ENCODE measurements at regions of chr19 and their contacts with region 1.

Region 1: GRCh38 chr19:13748169-13748828 is 16.0 kb upstream of the MRI1 start:
- DNase-seq: no peak
- ATAC-seq: no peak
- H3K4me3 Mint-ChIP-seq: peak overlapping the region; percentile 87
- H3K27ac Mint-ChIP-seq: peak overlapping the region; percentile 85
- H3K4me1 Mint-ChIP-seq: peaks cover 27% of the 10 kb centered on the region
- H3K27me3 Mint-ChIP-seq: no peaks in the 10 kb centered on the region
- CTCF ChIP-seq: no peak

Region 2: DNA sequence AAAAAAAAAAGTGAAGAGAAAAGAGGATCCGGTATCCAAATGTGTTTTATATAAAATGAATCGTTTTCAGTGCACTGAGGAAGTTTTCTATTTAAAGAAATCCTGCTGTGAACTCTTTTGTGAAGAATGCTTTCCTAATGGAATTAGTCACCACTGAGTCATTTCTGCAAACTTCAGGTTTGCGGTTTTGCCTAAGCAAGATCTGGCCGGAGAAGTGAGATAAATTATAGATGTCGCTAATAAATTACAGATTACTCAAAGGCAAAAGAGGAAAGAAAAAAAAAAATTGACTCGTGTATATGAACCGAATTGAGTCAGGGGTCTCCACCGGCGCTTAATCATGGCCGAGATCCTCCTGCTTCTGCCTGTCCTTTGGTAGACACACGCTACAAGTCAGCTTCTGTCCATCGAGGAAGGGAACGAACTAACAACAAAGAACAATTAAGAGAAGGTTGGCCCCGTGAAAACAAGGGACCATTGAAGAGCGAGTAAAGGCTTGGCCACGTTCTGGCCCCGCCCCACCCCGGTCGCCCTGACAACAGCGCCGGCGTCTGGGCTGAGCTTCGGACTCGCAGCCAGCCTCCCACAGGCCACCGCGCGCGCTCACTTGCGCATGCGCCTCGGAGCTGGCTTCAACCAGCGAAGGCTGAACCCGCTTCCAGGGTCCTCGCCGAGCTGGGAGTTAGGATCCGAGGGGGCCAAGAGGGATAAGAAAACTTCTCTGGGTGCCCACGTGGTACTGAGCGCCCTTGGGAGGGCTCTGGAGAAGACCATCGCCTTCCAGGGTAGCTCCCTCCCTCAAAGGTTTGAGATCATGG is 16.9 kb before region 1 on chr19:
- CTCF ChIA-PET with region 1: interaction called, 5 read pairs
- POLR2A ChIA-PET with region 1: interaction called, 34 read pairs
- intact Hi-C with region 1: loop called (anchors 1 kb)
- DNase-seq: peak; percentile 96
- ATAC-seq: peak; percentile 100
- H3K4me3 Mint-ChIP-seq: peak overlapping the region; percentile 90
- H3K27ac Mint-ChIP-seq: peak overlapping the region; percentile 93
- H3K4me1 Mint-ChIP-seq: peaks cover 21% of the 10 kb centered on the region
- H3K27me3 Mint-ChIP-seq: no peaks in the 10 kb centered on the region
- CTCF ChIP-seq: no peak

Region 3: DNA sequence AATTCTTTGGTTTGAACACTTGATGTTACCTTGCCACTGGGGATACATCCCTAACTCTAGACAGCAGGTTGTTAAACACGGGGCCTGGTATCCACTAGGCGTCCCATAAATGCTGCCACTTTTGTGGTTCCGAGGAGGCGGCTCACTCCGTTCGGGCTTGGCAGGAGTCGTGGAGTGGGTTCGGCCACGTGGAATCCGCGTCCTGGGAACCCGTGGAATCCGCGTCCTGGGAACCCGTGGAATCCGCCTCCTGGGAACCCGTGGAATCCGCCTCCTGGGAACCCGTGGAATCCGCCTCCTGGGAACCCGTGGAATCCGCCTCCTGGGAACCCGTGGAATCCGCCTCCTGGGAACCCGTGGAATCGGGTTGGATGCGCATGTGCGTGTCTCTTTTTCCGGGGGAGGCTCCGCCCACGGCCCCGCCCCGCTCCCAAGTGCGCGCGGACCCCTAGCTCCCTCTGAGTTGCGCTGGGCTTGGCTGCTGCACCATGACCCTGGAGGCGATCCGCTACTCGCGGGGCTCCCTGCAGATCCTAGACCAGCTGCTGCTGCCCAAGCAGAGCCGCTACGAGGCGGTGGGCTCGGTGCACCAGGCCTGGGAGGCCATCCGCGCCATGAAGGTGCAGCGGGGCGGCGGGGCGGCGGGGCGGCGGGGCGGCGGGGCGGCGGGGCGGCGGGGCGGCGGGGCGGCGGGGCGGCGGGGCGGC is 16.0 kb after region 1 on chr19 and contains the start of gene MRI1:
- CTCF ChIA-PET with region 1: interaction called, 3 read pairs
- POLR2A ChIA-PET with region 1: interaction called, 19 read pairs
- intact Hi-C with region 1: no loop called
- DNase-seq: peak; percentile 70
- ATAC-seq: peak; percentile 84
- H3K4me3 Mint-ChIP-seq: peak within 1 kb of the TSS; percentile 86
- H3K27ac Mint-ChIP-seq: peak within 1 kb of the TSS; percentile 70
- H3K4me1 Mint-ChIP-seq: peaks cover 16% of the 10 kb centered on the region
- H3K27me3 Mint-ChIP-seq: no peaks in the 10 kb centered on the region
- CTCF ChIP-seq: no peak
- total RNA-seq, gene MRI1: 32.5 and 37.5 TPM in 2 replicates

Region 4: DNA sequence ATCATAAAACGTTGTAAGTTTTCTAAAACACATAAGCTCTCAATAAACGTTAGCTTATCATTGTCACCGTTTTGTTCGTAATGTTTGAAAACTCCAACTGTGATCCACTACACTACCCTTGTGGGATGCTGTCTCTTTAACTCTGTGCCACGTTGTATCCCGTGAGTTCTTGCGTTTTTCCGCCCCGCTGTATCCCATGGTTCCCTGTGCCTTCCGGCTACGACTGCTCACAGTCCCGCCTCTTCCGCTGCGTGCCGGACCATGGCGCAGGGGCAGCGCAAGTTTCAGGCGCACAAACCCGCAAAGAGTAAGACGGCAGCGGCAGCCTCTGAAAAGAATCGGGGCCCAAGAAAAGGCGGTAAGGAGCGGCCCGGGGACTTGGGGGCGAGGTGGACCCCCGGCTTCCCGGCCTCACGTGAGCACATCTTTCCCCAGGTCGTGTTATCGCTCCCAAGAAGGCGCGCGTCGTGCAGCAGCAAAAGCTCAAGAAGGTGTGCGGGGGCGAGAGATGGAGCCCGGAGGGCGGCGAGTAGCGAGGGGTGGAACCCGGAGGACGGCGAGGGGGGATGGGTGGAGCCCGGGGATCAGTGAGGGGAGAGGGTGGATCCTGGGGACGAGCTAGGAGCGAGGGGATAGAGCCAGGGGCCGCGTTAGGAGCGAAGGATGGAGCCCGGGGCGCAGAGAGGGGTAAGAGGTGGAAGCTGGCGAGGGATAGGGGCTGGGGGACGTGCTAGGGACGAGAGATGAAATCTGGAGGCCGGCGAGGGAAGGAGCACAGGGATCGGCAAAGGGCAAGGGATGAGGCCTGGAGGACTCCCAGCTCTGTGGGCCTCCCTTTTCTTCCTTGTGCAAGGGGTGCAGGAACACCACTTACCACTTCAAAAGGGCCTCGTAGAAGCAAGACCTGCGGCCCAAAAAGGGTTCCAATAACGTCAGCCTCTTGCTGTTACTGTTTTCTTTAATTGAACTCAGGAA is 26.2 kb after region 1 on chr19 and contains the start of gene C19orf53:
- CTCF ChIA-PET with region 1: no interaction called
- POLR2A ChIA-PET with region 1: interaction called, 25 read pairs
- intact Hi-C with region 1: loop called (anchors 1 kb)
- DNase-seq: peak; percentile 86
- ATAC-seq: peak; percentile 99
- H3K4me3 Mint-ChIP-seq: peak within 1 kb of the TSS; percentile 100
- H3K27ac Mint-ChIP-seq: peak within 1 kb of the TSS; percentile 95
- H3K4me1 Mint-ChIP-seq: peaks cover 26% of the 10 kb centered on the region
- H3K27me3 Mint-ChIP-seq: no peaks in the 10 kb centered on the region
- CTCF ChIP-seq: no peak
- total RNA-seq, gene C19orf53: 74.9 and 76.1 TPM in 2 replicates

Region 5: GRCh38 chr19:13833330-13834243 is 85.3 kb after region 1 on chr19:
- CTCF ChIA-PET with region 1: no interaction called
- POLR2A ChIA-PET with region 1: interaction called, 10 read pairs
- intact Hi-C with region 1: no loop called
- DNase-seq: peak; percentile 92
- ATAC-seq: peak; percentile 86
- H3K4me3 Mint-ChIP-seq: peak overlapping the region; percentile 90
- H3K27ac Mint-ChIP-seq: peak overlapping the region; percentile 86
- H3K4me1 Mint-ChIP-seq: peaks cover 45% of the 10 kb centered on the region
- H3K27me3 Mint-ChIP-seq: no peaks in the 10 kb centered on the region
- CTCF ChIP-seq: no peak

Region 6: GRCh38 chr19:14091081-14091812 is 342.9 kb after region 1 on chr19:
- CTCF ChIA-PET with region 1: no interaction called
- POLR2A ChIA-PET with region 1: no interaction called
- intact Hi-C with region 1: loop called (anchors 5 kb)
- DNase-seq: peak; percentile 81
- ATAC-seq: peak; percentile 75
- H3K4me3 Mint-ChIP-seq: peak overlapping the region; percentile 99
- H3K27ac Mint-ChIP-seq: peak overlapping the region; percentile 99
- H3K4me1 Mint-ChIP-seq: peaks cover 18% of the 10 kb centered on the region
- H3K27me3 Mint-ChIP-seq: no peaks in the 10 kb centered on the region
- CTCF ChIP-seq: no peak